B cell (primary cell): ENCODE measurements at regions of chr16 and their contacts with region 1.

Region 1: GRCh38 chr16:4271176-4272066 is 1.4 kb downstream of the TFAP4 start:
- DNase-seq: peak; percentile 91
- ATAC-seq: peak; percentile 76
- H3K4me3 ChIP-seq: peak overlapping the region; percentile 43 to 99 (median 92)
- H3K4me3 Mint-ChIP-seq: peak overlapping the region; percentile 89
- H3K27ac ChIP-seq: peak overlapping the region; percentile 38 to 42
- H3K27ac Mint-ChIP-seq: peak overlapping the region; percentile 85
- H3K4me1 ChIP-seq: peaks cover 7 to 13% of the 10 kb centered on the region in 2 donors
- H3K4me1 Mint-ChIP-seq: peaks cover 11% of the 10 kb centered on the region
- H3K27me3 ChIP-seq: no peaks in the 10 kb centered on the region
- H3K27me3 Mint-ChIP-seq: no peaks in the 10 kb centered on the region
- CTCF ChIP-seq: peak; percentile 21

Region 2: GRCh38 chr16:3457434-3458252 is 813.8 kb before region 1 on chr16:
- CTCF ChIA-PET with region 1: no interaction called
- POLR2A ChIA-PET with region 1: no interaction called
- intact Hi-C with region 1: loop called (anchors 5 kb)
- DNase-seq: peak; percentile 96
- ATAC-seq: peak; percentile 94
- H3K4me3 ChIP-seq: peak overlapping the region; percentile 48 to 86 (median 73)
- H3K4me3 Mint-ChIP-seq: peak overlapping the region; percentile 84
- H3K27ac ChIP-seq: peak overlapping the region; percentile 87 to 95
- H3K27ac Mint-ChIP-seq: peak overlapping the region; percentile 90
- H3K4me1 ChIP-seq: peaks cover 28 to 39% of the 10 kb centered on the region in 2 donors
- H3K4me1 Mint-ChIP-seq: peaks cover 50% of the 10 kb centered on the region
- H3K27me3 ChIP-seq: no peaks in the 10 kb centered on the region
- H3K27me3 Mint-ChIP-seq: no peaks in the 10 kb centered on the region
- CTCF ChIP-seq: peak; percentile 63

Region 3: GRCh38 chr16:4240624-4241023 is 30.8 kb before region 1 on chr16:
- CTCF ChIA-PET with region 1: no interaction called
- POLR2A ChIA-PET with region 1: no interaction called
- intact Hi-C with region 1: no loop called
- DNase-seq: no peak
- ATAC-seq: no peak
- H3K4me3 ChIP-seq: no peak overlapping the region
- H3K4me3 Mint-ChIP-seq: no peak overlapping the region
- H3K27ac ChIP-seq: no peak overlapping the region
- H3K27ac Mint-ChIP-seq: no peak overlapping the region
- H3K4me1 ChIP-seq: no peaks in the 10 kb centered on the region
- H3K4me1 Mint-ChIP-seq: no peaks in the 10 kb centered on the region
- H3K27me3 ChIP-seq: peaks cover 0 to 12% (median 4%) of the 10 kb centered on the region in 4 experiments
- H3K27me3 Mint-ChIP-seq: peaks cover 18% of the 10 kb centered on the region
- CTCF ChIP-seq: no peak

Region 4: GRCh38 chr16:4253394-4254150 is 17.8 kb before region 1 on chr16:
- CTCF ChIA-PET with region 1: interaction called, 97 read pairs
- POLR2A ChIA-PET with region 1: interaction called, 26 read pairs
- intact Hi-C with region 1: loop called (anchors 1 kb)
- DNase-seq: peak; percentile 100
- ATAC-seq: peak; percentile 96
- H3K4me3 ChIP-seq: peak overlapping the region; percentile 22 to 90 (median 80)
- H3K4me3 Mint-ChIP-seq: peak overlapping the region; percentile 97
- H3K27ac ChIP-seq: peak overlapping the region; percentile 73 to 88
- H3K27ac Mint-ChIP-seq: peak overlapping the region; percentile 98
- H3K4me1 ChIP-seq: peaks cover 0 to 11% of the 10 kb centered on the region in 2 donors
- H3K4me1 Mint-ChIP-seq: peaks cover 6% of the 10 kb centered on the region
- H3K27me3 ChIP-seq: no peaks in the 10 kb centered on the region
- H3K27me3 Mint-ChIP-seq: no peaks in the 10 kb centered on the region
- CTCF ChIP-seq: no peak

Region 5: GRCh38 chr16:4330277-4330874 is 59.0 kb after region 1 on chr16:
- CTCF ChIA-PET with region 1: interaction called, 10 read pairs
- POLR2A ChIA-PET with region 1: interaction called, 5 read pairs
- intact Hi-C with region 1: no loop called
- DNase-seq: peak; percentile 74
- ATAC-seq: peak; percentile 72
- H3K4me3 ChIP-seq: no peak overlapping the region
- H3K4me3 Mint-ChIP-seq: no peak overlapping the region
- H3K27ac ChIP-seq: no peak overlapping the region
- H3K27ac Mint-ChIP-seq: no peak overlapping the region
- H3K4me1 ChIP-seq: peaks cover 14 to 18% of the 10 kb centered on the region in 2 donors
- H3K4me1 Mint-ChIP-seq: peaks cover 6% of the 10 kb centered on the region
- H3K27me3 ChIP-seq: peaks cover 0 to 24% (median 0%) of the 10 kb centered on the region in 4 experiments
- H3K27me3 Mint-ChIP-seq: peaks cover 3% of the 10 kb centered on the region
- CTCF ChIP-seq: peak; percentile 98

Region 6: GRCh38 chr16:4416200-4417032 is 145.0 kb after region 1 on chr16 and contains the start of gene CORO7:
- CTCF ChIA-PET with region 1: no interaction called
- POLR2A ChIA-PET with region 1: interaction called, 4 read pairs
- intact Hi-C with region 1: loop called (anchors 5 kb)
- DNase-seq: peak; percentile 99
- ATAC-seq: peak; percentile 90
- H3K4me3 ChIP-seq: peak within 1 kb of the TSS; percentile 62 to 94 (median 78)
- H3K4me3 Mint-ChIP-seq: peak within 1 kb of the TSS; percentile 96
- H3K27ac ChIP-seq: peak within 1 kb of the TSS; percentile 91 to 95
- H3K27ac Mint-ChIP-seq: peak within 1 kb of the TSS; percentile 95
- H3K4me1 ChIP-seq: peaks cover 24 to 35% of the 10 kb centered on the region in 2 donors
- H3K4me1 Mint-ChIP-seq: peaks cover 31% of the 10 kb centered on the region
- H3K27me3 ChIP-seq: no peaks in the 10 kb centered on the region
- H3K27me3 Mint-ChIP-seq: no peaks in the 10 kb centered on the region
- CTCF ChIP-seq: no peak
- total RNA-seq, gene CORO7: 114 and 117 TPM in 2 replicates

Region 7: GRCh38 chr16:4624015-4624826 is 352.8 kb after region 1 on chr16 and contains the start of gene MGRN1:
- CTCF ChIA-PET with region 1: no interaction called
- POLR2A ChIA-PET with region 1: no interaction called
- intact Hi-C with region 1: loop called (anchors 10 kb)
- DNase-seq: peak; percentile 96
- ATAC-seq: peak; percentile 91
- H3K4me3 ChIP-seq: peak within 1 kb of the TSS; percentile 67 to 90 (median 73)
- H3K4me3 Mint-ChIP-seq: peak within 1 kb of the TSS; percentile 100
- H3K27ac ChIP-seq: peak within 1 kb of the TSS; percentile 77 to 97
- H3K27ac Mint-ChIP-seq: peak within 1 kb of the TSS; percentile 98
- H3K4me1 ChIP-seq: peaks cover 18 to 27% of the 10 kb centered on the region in 2 donors
- H3K4me1 Mint-ChIP-seq: peaks cover 35% of the 10 kb centered on the region
- H3K27me3 ChIP-seq: no peaks in the 10 kb centered on the region
- H3K27me3 Mint-ChIP-seq: no peaks in the 10 kb centered on the region
- CTCF ChIP-seq: peak; percentile 86
- total RNA-seq, gene MGRN1: 89.2 and 89.8 TPM in 2 replicates

Region 8: GRCh38 chr16:4734063-4734729 is 462.8 kb after region 1 on chr16 and contains the starts of genes ANKS3 and DNAAF8:
- CTCF ChIA-PET with region 1: no interaction called
- POLR2A ChIA-PET with region 1: no interaction called
- intact Hi-C with region 1: loop called (anchors 2 kb)
- DNase-seq: peak; percentile 89
- ATAC-seq: peak; percentile 80
- H3K4me3 ChIP-seq: peak within 1 kb of the TSS; percentile 79 to 98 (median 91)
- H3K4me3 Mint-ChIP-seq: peak within 1 kb of the TSS; percentile 90
- H3K27ac ChIP-seq: peak within 1 kb of the TSS; percentile 35 to 89
- H3K27ac Mint-ChIP-seq: peak within 1 kb of the TSS; percentile 89
- H3K4me1 ChIP-seq: peaks cover 10 to 13% of the 10 kb centered on the region in 2 donors
- H3K4me1 Mint-ChIP-seq: peaks cover 17% of the 10 kb centered on the region
- H3K27me3 ChIP-seq: no peaks in the 10 kb centered on the region
- H3K27me3 Mint-ChIP-seq: no peaks in the 10 kb centered on the region
- CTCF ChIP-seq: no peak
- total RNA-seq, gene ANKS3: 31.9 and 36.2 TPM in 2 replicates
- total RNA-seq, gene DNAAF8: 0.19 and 0.44 TPM in 2 replicates